Lower leg skin (tissue), 4 donors: ENCODE measurements at regions of chr17 and their contacts with region 1.

Region 1: DNA sequence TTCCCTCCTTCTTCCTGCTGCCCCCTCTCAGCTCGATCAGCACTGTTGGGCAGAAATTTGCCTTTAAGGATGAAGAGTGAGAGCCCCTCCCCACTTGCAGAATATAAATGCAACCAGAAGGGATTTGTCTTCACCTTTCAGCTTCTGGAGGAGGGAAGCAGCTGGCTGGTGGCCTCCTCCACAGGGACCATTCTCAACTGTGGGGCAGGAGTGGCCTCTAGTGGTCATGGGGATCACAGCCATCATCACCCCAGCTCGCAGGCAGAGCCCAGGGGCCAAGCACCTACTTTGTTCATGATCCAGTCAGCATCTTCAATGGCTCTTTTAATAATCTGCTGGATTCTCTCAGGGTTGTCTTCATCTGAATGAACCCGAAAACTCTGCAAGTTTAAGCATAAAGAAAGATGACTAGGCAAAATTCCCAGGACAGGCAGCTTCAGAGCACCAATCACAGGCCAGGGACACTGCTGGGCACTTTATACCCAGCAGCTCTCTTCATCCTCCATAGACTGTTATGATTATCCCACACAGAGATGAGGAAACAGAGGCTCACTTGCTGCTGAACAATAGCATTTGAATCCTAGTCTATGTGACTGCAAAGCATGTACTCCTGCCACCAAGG is 13.1 kb downstream of the LYRM9 start:
- DNase-seq: peak in 1 of 2 donors; percentile 25
- H3K4me3 ChIP-seq: no peak overlapping the region
- CTCF ChIP-seq: no peak
- POLR2A ChIP-seq: no peak

Region 2: GRCh38 chr17:27756512-27757371 is 123.4 kb before region 1 on chr17:
- intact Hi-C with region 1: loop called (anchors 1 kb)
- DNase-seq: peak in 1 of 2 donors; percentile 49
- H3K4me3 ChIP-seq: no peak overlapping the region
- CTCF ChIP-seq: peak in 1 of 3 donors; percentile 62
- POLR2A ChIP-seq: no peak

Region 3: GRCh38 chr17:27805520-27806146 is 74.5 kb before region 1 on chr17:
- intact Hi-C with region 1: loop called (anchors 5 kb)
- DNase-seq: peak; percentile 86 to 95
- H3K4me3 ChIP-seq: no peak overlapping the region
- CTCF ChIP-seq: peak in 1 of 3 donors; percentile 84
- POLR2A ChIP-seq: no peak